Endothelial cell of umbilical vein (primary cell): ENCODE measurements at regions of chr7 and their contacts with region 1.

Region 1: GRCh38 chr7:95916573-95917297 is 144.4 kb downstream of the DYNC1I1 start:
- DNase-seq: peak; percentile 77
- H3K4me3 ChIP-seq: no peak overlapping the region
- H3K27ac ChIP-seq: no peak overlapping the region
- H3K4me1 ChIP-seq: no peaks in the 10 kb centered on the region
- H3K27me3 ChIP-seq: peaks cover 20 to 21% of the 10 kb centered on the region in 2 experiments
- CTCF ChIP-seq: peak; percentile 72 to 94
- POLR2A ChIP-seq: no peak

Region 2: GRCh38 chr7:95491634-95492320 is 425.0 kb before region 1 on chr7:
- CTCF ChIA-PET with region 1: no interaction called
- POLR2A ChIA-PET with region 1: no interaction called
- dilution Hi-C with region 1: no loop called
- intact Hi-C with region 1: no loop called
- DNase-seq: no peak
- H3K4me3 ChIP-seq: no peak overlapping the region
- H3K27ac ChIP-seq: no peak overlapping the region
- H3K4me1 ChIP-seq: no peaks in the 10 kb centered on the region
- H3K27me3 ChIP-seq: peaks cover 3% of the 10 kb centered on the region in 2 experiments
- CTCF ChIP-seq: no peak
- POLR2A ChIP-seq: no peak

Region 3: GRCh38 chr7:95723592-95724180 is 193.0 kb before region 1 on chr7:
- CTCF ChIA-PET with region 1: interaction called, 5 read pairs
- POLR2A ChIA-PET with region 1: no interaction called
- dilution Hi-C with region 1: no loop called
- intact Hi-C with region 1: loop called (anchors 2 kb)
- DNase-seq: peak; percentile 76
- H3K4me3 ChIP-seq: no peak overlapping the region
- H3K27ac ChIP-seq: no peak overlapping the region
- H3K4me1 ChIP-seq: no peaks in the 10 kb centered on the region
- H3K27me3 ChIP-seq: peaks cover 7 to 13% of the 10 kb centered on the region in 2 experiments
- CTCF ChIP-seq: peak; percentile 31 to 32
- POLR2A ChIP-seq: no peak

Region 4: GRCh38 chr7:96414931-96415292 is 498.2 kb after region 1 on chr7:
- CTCF ChIA-PET with region 1: no interaction called
- POLR2A ChIA-PET with region 1: no interaction called
- dilution Hi-C with region 1: no loop called
- intact Hi-C with region 1: loop called (anchors 5 kb)
- DNase-seq: peak; percentile 10
- H3K4me3 ChIP-seq: no peak overlapping the region
- H3K27ac ChIP-seq: no peak overlapping the region
- H3K4me1 ChIP-seq: peaks cover 6% of the 10 kb centered on the region
- H3K27me3 ChIP-seq: no peaks in the 10 kb centered on the region
- CTCF ChIP-seq: peak; percentile 40 to 41
- POLR2A ChIP-seq: no peak

Region 5: GRCh38 chr7:96709381-96710228 is 792.9 kb after region 1 on chr7 and contains the start of gene SEM1:
- CTCF ChIA-PET with region 1: no interaction called
- POLR2A ChIA-PET with region 1: no interaction called
- dilution Hi-C with region 1: no loop called
- intact Hi-C with region 1: loop called (anchors 10 kb)
- DNase-seq: peak; percentile 91
- H3K4me3 ChIP-seq: peak within 1 kb of the TSS; percentile 70 to 98 (median 73)
- H3K27ac ChIP-seq: peak within 1 kb of the TSS; percentile 96
- H3K4me1 ChIP-seq: peaks cover 15% of the 10 kb centered on the region
- H3K27me3 ChIP-seq: peaks cover 0 to 4% of the 10 kb centered on the region in 2 experiments
- CTCF ChIP-seq: no peak
- POLR2A ChIP-seq: peak; percentile 80
- total RNA-seq, gene SEM1: 81.6 and 94.7 TPM in 2 replicates

Region 6: GRCh38 chr7:97064967-97065587 is 1148.3 kb after region 1 on chr7:
- CTCF ChIA-PET with region 1: interaction called, 17 read pairs
- POLR2A ChIA-PET with region 1: no interaction called
- dilution Hi-C with region 1: no loop called
- intact Hi-C with region 1: loop called (anchors 1 kb)
- DNase-seq: peak; percentile 54
- H3K4me3 ChIP-seq: no peak overlapping the region
- H3K27ac ChIP-seq: no peak overlapping the region
- H3K4me1 ChIP-seq: no peaks in the 10 kb centered on the region
- H3K27me3 ChIP-seq: peaks cover 0 to 2% of the 10 kb centered on the region in 2 experiments
- CTCF ChIP-seq: peak; percentile 53 to 68
- POLR2A ChIP-seq: no peak